Heart left ventricle (tissue), 16 donors: ENCODE measurements at regions of chr6 and their contacts with region 1.

Region 1: GRCh38 chr6:151121900-151122299 is 117.9 kb upstream of the AKAP12 start:
- DNase-seq: peak; percentile 71 to 87 (median 72)
- ATAC-seq: peak; percentile 66 to 92 (median 79)
- H3K4me3 ChIP-seq: no peak overlapping the region
- H3K27ac ChIP-seq: peak overlapping the region in 1 of 12 donors; percentile 32
- H3K4me1 ChIP-seq: peaks cover 0 to 9% (median 2%) of the 10 kb centered on the region in 12 donors
- H3K27me3 ChIP-seq: no peaks in the 10 kb centered on the region
- CTCF ChIP-seq: no peak
- POLR2A ChIP-seq: no peak

Region 2: DNA sequence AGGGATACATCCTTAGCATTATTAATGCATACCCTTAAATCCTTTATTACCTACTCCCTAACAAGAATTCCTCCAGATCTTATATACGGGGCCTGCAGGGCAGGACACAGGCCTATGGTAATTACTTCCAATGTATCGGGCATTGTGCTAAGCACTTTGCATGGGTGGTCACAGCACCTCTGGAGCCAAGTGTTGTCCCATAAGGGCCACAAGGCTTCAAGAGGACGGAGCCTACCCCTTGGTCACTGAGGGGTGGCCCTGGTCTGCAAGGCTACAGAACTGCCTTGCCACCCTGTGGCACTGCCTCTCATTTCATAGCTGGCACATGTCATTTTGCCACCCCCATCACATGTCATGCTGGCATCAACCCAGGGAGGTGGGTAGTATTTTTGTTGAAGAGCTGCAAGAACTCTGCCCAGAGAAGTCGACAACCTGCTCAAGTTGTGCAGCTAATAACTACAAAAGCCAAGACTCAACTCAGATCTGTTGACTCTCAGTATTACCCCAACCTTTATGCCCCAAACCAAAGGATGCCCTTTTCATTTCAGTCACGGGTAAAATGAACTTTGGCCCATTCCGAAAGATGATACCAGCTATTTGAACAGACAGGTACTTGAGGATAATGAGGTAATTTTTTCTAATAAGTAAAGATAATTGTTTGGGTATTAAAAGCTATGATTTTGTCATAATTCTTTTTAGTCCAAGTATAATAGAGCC is 26.2 kb before region 1 on chr6:
- intact Hi-C with region 1: loop called in 1 of 10 experiments (anchors 2 kb)
- DNase-seq: no peak
- ATAC-seq: no peak
- H3K4me3 ChIP-seq: no peak overlapping the region
- H3K27ac ChIP-seq: no peak overlapping the region
- H3K4me1 ChIP-seq: peaks cover 0 to 4% (median 0%) of the 10 kb centered on the region in 12 donors
- H3K27me3 ChIP-seq: no peaks in the 10 kb centered on the region
- CTCF ChIP-seq: no peak
- POLR2A ChIP-seq: no peak